ENCODE measurements at regions of chr22 and their contacts with region 1.

Region 1: GRCh38 chr22:31676700-31677099 is 14.7 kb upstream of the PISD start:
- DNase-seq: peak; percentile 94 to 97 (median 96)
- H3K4me3 ChIP-seq: peak overlapping the region; percentile 46 to 78 (median 74)
- H3K4me3 Mint-ChIP-seq: peak overlapping the region; percentile 79 to 94
- H3K27ac ChIP-seq: peak overlapping the region; percentile 46 to 89
- H3K27ac Mint-ChIP-seq: peak overlapping the region; percentile 86 to 93 (median 92)
- H3K4me1 ChIP-seq: peaks cover 33 to 37% of the 10 kb centered on the region in 2 donors
- H3K4me1 Mint-ChIP-seq: peaks cover 39% of the 10 kb centered on the region
- H3K27me3 ChIP-seq: no peaks in the 10 kb centered on the region
- H3K27me3 Mint-ChIP-seq: no peaks in the 10 kb centered on the region
- CTCF ChIP-seq: no peak

Region 2: DNA sequence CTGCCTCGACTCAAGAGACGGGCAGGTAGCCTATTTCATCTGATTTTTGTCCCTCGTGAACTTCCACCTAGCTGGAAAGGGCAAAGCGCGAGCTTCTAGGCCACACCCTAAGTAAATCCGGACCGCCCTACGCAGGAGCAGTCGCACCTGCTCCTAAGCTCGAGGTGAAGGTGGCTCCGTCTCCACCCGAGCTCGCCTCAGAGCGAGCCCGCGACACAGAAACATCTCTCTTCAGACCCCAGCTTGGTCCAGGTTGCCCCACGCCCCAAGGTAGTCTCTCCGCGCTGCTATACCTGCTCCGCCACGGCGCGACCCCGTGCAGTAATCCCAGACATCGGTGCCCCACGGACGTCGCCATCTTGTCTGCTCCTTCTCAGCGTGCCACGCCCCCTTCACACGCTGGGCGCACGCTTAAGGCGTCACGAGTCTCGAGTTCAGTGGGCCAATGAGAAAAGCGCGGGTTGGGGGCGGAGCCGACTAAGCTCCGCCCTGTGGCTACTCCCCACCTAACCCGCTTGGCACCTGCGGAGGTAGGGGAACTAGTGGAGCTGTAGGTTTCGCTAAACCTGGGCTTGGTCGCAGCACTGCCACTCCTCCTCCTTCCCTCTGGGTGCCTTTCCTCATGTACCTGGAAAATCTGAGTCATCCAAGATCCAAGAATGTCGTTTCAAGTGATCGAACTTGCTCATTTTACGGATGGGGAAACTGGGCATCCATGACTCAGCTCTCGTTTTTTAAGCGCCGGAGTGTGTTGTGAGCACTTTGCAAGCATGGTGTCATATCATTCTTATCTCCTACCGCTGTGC is 14.6 kb before region 1 on chr22 and contains the start of gene PISD:
- intact Hi-C with region 1: loop called in 1 of 2 experiments (anchors 2 kb)
- DNase-seq: peak; percentile 93 to 95 (median 94)
- H3K4me3 ChIP-seq: peak within 1 kb of the TSS; percentile 57 to 100 (median 92)
- H3K4me3 Mint-ChIP-seq: peak within 1 kb of the TSS; percentile 99 to 100
- H3K27ac ChIP-seq: peak within 1 kb of the TSS; percentile 62 to 95
- H3K27ac Mint-ChIP-seq: peak within 1 kb of the TSS; percentile 94 to 97 (median 96)
- H3K4me1 ChIP-seq: peaks cover 23 to 29% of the 10 kb centered on the region in 2 donors
- H3K4me1 Mint-ChIP-seq: peaks cover 23% of the 10 kb centered on the region
- H3K27me3 ChIP-seq: no peaks in the 10 kb centered on the region
- H3K27me3 Mint-ChIP-seq: peaks cover 0 to 1% (median 0%) of the 10 kb centered on the region in 3 donors
- CTCF ChIP-seq: no peak
- polyA plus RNA-seq, gene PISD: 38.1 to 112 (median 45.3) TPM